CD4-positive, alpha-beta memory T cell (primary cell): ENCODE measurements at regions of chr3 and their contacts with region 1.

Region 1: DNA sequence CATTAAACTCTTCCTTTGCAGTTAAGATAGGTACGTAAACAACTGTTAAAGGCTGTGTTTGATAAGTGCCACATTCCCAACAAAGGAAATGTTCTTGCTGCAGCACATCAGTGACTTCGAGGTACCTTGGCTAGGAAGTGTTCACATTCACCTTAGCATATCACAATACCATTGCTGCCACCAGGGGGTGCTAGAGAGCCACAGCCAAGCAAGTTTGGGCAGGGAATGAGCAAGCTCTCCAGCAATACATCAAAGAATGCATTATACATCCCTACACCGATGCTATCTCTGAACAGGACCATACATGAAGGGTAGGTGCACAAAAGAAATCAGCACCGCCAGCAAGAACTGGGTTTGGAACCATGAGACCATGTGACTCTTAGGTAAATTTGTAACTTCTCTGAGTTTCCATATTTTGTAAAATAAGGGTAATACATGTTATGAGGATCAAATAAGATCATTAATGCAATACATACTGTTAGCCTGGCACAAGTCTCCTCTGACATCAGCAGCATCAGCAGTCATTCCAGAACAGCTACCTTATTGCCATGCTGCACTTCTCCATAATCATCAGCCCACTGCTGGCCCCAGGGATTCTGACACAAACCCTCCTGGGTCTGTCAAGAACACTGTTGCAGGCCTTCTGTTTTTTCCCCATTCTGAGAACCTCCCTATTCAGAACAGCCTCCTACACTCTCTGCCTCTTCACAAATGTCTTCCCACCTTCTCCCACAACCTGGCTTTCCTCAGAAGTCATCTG is 37.6 kb downstream of the RYK start:
- DNase-seq: peak; percentile 67 to 78 (median 73)
- H3K4me3 ChIP-seq: no peak overlapping the region
- H3K4me3 Mint-ChIP-seq: no peak overlapping the region
- H3K27ac ChIP-seq: no peak overlapping the region
- H3K27ac Mint-ChIP-seq: peak overlapping the region in 6 of 7 donors; percentile 5 to 84 (median 38)
- H3K4me1 ChIP-seq: no peaks in the 10 kb centered on the region
- H3K4me1 Mint-ChIP-seq: peaks cover 15 to 28% (median 25%) of the 10 kb centered on the region in 4 donors
- H3K27me3 ChIP-seq: no peaks in the 10 kb centered on the region
- H3K27me3 Mint-ChIP-seq: no peaks in the 10 kb centered on the region

Region 2: GRCh38 chr3:133016838-133017309 is 1196.2 kb before region 1 on chr3:
- CTCF ChIA-PET with region 1: no interaction called
- POLR2A ChIA-PET with region 1: no interaction called
- intact Hi-C with region 1: no loop called
- DNase-seq: no peak
- H3K4me3 ChIP-seq: no peak overlapping the region
- H3K4me3 Mint-ChIP-seq: no peak overlapping the region
- H3K27ac ChIP-seq: no peak overlapping the region
- H3K27ac Mint-ChIP-seq: no peak overlapping the region
- H3K4me1 ChIP-seq: no peaks in the 10 kb centered on the region
- H3K4me1 Mint-ChIP-seq: no peaks in the 10 kb centered on the region
- H3K27me3 ChIP-seq: no peaks in the 10 kb centered on the region
- H3K27me3 Mint-ChIP-seq: peaks cover 0 to 9% of the 10 kb centered on the region in 2 donors

Region 3: DNA sequence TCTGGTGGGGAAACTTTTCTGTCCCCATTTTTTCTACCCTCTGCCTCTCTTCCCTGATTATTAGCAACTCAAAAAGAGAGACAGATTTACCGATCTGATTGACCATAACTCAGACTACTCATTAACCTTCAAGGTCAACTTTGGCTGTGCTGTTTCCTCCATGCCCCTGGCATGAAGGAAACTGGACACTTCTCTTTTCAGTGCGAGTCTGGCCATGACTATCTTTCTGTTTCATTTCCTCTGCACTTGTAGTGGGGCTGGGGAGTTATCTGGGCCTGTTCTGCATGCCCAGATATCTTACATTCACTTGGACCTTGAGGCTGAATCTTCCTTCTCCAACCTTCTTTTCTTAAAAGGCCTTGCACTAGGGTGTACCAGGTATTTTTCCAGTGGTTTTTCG is 106.5 kb before region 1 on chr3:
- CTCF ChIA-PET with region 1: no interaction called
- POLR2A ChIA-PET with region 1: no interaction called
- intact Hi-C with region 1: no loop called
- DNase-seq: no peak
- H3K4me3 ChIP-seq: no peak overlapping the region
- H3K4me3 Mint-ChIP-seq: no peak overlapping the region
- H3K27ac ChIP-seq: no peak overlapping the region
- H3K27ac Mint-ChIP-seq: no peak overlapping the region
- H3K4me1 ChIP-seq: no peaks in the 10 kb centered on the region
- H3K4me1 Mint-ChIP-seq: no peaks in the 10 kb centered on the region
- H3K27me3 ChIP-seq: no peaks in the 10 kb centered on the region
- H3K27me3 Mint-ChIP-seq: peaks cover 3 to 6% of the 10 kb centered on the region in 2 donors

Region 4: GRCh38 chr3:134232151-134232550 is 19.1 kb after region 1 on chr3:
- CTCF ChIA-PET with region 1: interaction called, 76 read pairs
- POLR2A ChIA-PET with region 1: no interaction called
- intact Hi-C with region 1: no loop called
- DNase-seq: no peak
- H3K4me3 ChIP-seq: no peak overlapping the region
- H3K4me3 Mint-ChIP-seq: peak overlapping the region in 6 of 8 donors; percentile 7 to 66 (median 33)
- H3K27ac ChIP-seq: no peak overlapping the region
- H3K27ac Mint-ChIP-seq: peak overlapping the region in 1 of 7 donors; percentile 32
- H3K4me1 ChIP-seq: peaks cover 37% of the 10 kb centered on the region
- H3K4me1 Mint-ChIP-seq: peaks cover 46 to 73% (median 57%) of the 10 kb centered on the region in 4 donors
- H3K27me3 ChIP-seq: no peaks in the 10 kb centered on the region
- H3K27me3 Mint-ChIP-seq: no peaks in the 10 kb centered on the region

Region 5: GRCh38 chr3:134250717-134251220 is 37.7 kb after region 1 on chr3 and contains the start of gene RYK:
- CTCF ChIA-PET with region 1: interaction called, 5 read pairs
- POLR2A ChIA-PET with region 1: no interaction called
- intact Hi-C with region 1: loop called (anchors 5 kb)
- DNase-seq: peak; percentile 72 to 84 (median 78)
- H3K4me3 ChIP-seq: peak within 1 kb of the TSS; percentile 43 to 73
- H3K4me3 Mint-ChIP-seq: peak within 1 kb of the TSS; percentile 93 to 98 (median 94)
- H3K27ac ChIP-seq: peak within 1 kb of the TSS; percentile 66
- H3K27ac Mint-ChIP-seq: peak within 1 kb of the TSS; percentile 89 to 97 (median 95)
- H3K4me1 ChIP-seq: peaks cover 44% of the 10 kb centered on the region
- H3K4me1 Mint-ChIP-seq: peaks cover 35 to 70% (median 51%) of the 10 kb centered on the region in 4 donors
- H3K27me3 ChIP-seq: no peaks in the 10 kb centered on the region
- H3K27me3 Mint-ChIP-seq: no peaks in the 10 kb centered on the region
- total RNA-seq, gene RYK: 44.7 to 47.9 TPM

Region 6: DNA sequence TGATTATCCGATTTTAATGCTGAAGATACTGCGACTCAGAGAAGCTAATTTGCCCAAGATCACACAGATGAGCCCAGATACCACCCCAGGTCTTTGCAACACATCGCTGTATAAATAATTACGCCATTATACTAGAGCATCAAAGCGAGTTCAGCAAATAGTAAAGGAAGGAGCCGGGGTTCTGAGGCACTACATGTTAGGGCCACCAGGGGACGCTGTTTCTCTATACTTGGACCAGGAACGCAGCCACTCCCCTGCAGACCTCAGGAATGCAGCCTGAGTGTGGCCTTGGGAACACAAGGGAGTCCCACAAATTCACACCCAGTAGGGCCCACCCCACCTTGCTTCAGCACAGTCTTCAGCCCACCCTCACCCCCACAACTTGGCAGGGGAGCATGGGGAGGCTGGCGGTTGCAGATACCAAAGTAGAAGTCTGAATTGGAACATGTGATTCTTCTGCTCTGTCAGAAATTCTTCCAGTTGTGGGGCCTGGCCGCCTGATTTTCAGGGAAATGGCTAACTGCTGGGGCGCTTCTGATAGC is 95.3 kb after region 1 on chr3:
- CTCF ChIA-PET with region 1: interaction called, 19 read pairs
- POLR2A ChIA-PET with region 1: no interaction called
- intact Hi-C with region 1: loop called (anchors 1 kb)
- DNase-seq: peak; percentile 68 to 74 (median 71)
- H3K4me3 ChIP-seq: no peak overlapping the region
- H3K4me3 Mint-ChIP-seq: peak overlapping the region in 4 of 8 donors; percentile 3 to 70 (median 67)
- H3K27ac ChIP-seq: no peak overlapping the region
- H3K27ac Mint-ChIP-seq: no peak overlapping the region
- H3K4me1 ChIP-seq: peaks cover under 1% of the 10 kb centered on the region
- H3K4me1 Mint-ChIP-seq: peaks cover 2 to 7% (median 3%) of the 10 kb centered on the region in 4 donors
- H3K27me3 ChIP-seq: peaks cover 5% of the 10 kb centered on the region
- H3K27me3 Mint-ChIP-seq: peaks cover 21% of the 10 kb centered on the region in 2 donors

Region 7: DNA sequence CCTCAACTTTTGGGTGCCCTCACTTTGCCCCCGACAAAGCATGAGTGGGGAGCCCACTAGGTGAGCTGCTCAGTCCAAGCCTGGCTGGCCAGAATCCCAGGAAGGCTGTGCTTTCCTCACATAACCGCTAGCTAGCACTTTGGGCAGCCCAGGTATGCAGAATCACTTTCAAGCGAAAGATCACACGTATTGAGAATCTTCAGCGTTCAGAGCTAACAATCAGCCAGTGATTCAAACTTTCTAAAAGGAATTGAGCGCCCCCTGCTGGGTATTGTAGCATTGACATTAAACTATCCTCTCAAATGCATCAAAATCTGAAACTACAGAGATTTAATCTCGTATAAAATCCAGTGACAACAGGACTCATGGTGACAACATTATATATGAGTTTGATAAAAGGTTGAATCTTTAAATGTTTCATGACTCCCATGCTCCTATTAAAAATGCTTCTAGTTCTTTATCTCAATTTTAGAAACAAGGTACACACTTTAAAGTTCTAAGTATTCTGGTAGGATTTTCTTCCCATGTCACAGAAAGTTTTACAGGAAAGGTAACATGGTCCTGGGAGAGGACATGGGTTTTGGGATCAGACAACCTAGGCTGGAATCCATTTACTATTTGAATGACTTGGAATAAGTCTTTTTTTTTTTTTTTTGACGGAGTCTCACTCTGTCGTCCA is 260.9 kb after region 1 on chr3:
- CTCF ChIA-PET with region 1: interaction called, 109 read pairs
- POLR2A ChIA-PET with region 1: no interaction called
- intact Hi-C with region 1: loop called (anchors 1 kb)
- DNase-seq: peak; percentile 67 to 80 (median 72)
- H3K4me3 ChIP-seq: no peak overlapping the region
- H3K4me3 Mint-ChIP-seq: no peak overlapping the region
- H3K27ac ChIP-seq: no peak overlapping the region
- H3K27ac Mint-ChIP-seq: peak overlapping the region in 2 of 7 donors; percentile 8 to 80
- H3K4me1 ChIP-seq: no peaks in the 10 kb centered on the region
- H3K4me1 Mint-ChIP-seq: peaks cover 0 to 5% (median 3%) of the 10 kb centered on the region in 4 donors
- H3K27me3 ChIP-seq: no peaks in the 10 kb centered on the region
- H3K27me3 Mint-ChIP-seq: no peaks in the 10 kb centered on the region